ENCODE measurements at regions of chr17 and their contacts with region 1.

Region 1: GRCh38 chr17:72120642-72121163 is at the start of gene SOX9:
- DNase-seq: peak; percentile 91 to 95 (median 94)
- ATAC-seq: peak; percentile 94 to 95
- H3K4me3 ChIP-seq: peak within 1 kb of the TSS; percentile 59
- H3K27ac ChIP-seq: peak within 1 kb of the TSS; percentile 75
- H3K4me1 ChIP-seq: peaks cover 5% of the 10 kb centered on the region
- H3K27me3 ChIP-seq: no peaks in the 10 kb centered on the region
- total RNA-seq, gene SOX9: 10.5 to 23.5 (median 20.6) TPM

Region 2: DNA sequence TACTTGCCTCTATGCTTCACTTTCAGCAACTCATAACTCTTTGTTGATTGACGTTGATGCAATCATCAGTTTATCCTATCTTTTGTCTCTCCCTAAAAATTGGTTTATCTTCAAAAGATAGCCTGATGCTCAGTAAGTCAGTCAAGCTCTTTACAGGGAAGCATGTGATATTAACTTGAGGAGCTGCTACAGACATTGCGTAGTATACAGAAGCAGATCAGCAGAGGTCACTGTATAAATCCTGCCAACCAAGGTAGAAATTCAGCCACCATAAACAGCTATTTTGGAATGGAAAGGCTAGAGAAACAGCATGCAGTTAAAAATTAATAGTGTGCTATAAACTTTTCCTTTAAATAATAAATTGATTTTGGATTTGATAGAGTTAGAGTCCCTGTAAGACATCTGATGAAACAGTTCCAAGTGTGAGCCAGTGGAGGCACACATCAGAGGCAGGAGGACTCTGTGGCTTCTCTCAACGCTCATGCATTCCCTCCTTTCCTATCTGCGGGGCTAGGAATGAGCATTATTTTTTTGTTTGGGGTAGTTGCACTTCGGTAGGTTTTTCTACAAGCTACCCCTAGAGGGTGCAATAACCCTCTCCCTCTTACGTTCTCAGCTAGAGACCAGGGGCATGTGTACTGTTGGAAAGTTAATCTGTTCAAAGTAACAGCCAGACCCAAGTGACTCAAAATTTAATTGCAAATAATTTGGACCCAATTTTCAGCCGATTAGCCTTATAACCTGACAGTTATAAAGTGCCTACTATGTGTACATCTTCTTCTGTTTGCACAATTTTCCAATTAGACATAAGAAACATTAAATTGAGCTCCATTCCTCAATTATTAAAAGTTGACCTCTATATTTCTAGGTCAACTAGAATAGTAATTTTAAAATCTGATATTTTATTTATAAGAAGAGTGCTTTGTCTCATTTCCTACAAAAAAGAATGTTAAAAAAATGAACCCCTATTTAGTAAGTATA is 647.6 kb before region 1 on chr17:
- intact Hi-C with region 1: loop called in 2 of 4 experiments (anchors 5 to 10 kb)
- DNase-seq: no peak
- ATAC-seq: peak; percentile 50 to 56
- H3K4me3 ChIP-seq: no peak overlapping the region
- H3K27ac ChIP-seq: no peak overlapping the region
- H3K4me1 ChIP-seq: no peaks in the 10 kb centered on the region
- H3K27me3 ChIP-seq: no peaks in the 10 kb centered on the region

Region 3: DNA sequence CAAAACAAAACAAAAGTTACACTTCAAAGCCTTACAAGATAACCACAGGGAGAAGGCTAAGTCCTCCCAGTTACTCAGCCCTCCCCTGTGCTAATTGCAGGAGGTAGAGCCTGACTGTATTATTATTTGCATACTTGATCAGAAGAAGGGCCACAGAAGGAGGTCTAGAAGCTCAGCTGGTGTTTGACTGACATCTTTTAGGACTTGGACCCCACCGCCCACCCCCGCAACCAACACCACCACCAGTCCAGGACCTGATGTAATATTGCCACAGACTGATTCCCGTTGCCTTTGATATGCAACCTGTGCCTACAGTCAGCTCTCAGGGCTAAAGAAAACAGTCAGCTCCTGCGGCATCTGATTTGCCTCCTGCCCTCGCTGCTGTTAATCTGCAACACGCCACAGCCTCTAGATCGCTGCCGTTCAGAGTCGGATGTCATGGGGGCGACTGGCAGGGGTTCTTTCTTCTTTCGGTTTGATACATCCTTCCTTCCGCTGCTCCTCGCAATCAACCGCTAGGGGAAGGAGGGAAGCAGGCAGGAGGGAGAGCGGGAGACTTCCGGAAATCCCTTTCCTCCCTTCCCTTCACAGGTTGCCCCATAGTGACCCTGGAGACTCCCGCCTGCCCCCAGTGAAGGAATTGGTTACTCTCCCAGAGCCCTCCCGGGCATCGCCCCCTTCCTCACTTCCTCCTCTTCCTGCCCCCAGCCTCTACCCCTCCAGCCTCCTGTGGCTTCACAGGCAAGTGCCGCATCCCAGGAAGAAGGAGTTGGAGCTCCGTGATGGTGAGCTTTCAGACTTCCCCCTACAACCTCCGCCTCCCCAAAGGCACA is 90.4 kb before region 1 on chr17:
- intact Hi-C with region 1: loop called in 1 of 4 experiments (anchors 10 kb)
- DNase-seq: peak; percentile 40 to 80 (median 60)
- ATAC-seq: peak; percentile 76 to 78
- H3K4me3 ChIP-seq: peak overlapping the region; percentile 49
- H3K27ac ChIP-seq: no peak overlapping the region
- H3K4me1 ChIP-seq: peaks cover 2% of the 10 kb centered on the region
- H3K27me3 ChIP-seq: no peaks in the 10 kb centered on the region

Region 4: GRCh38 chr17:72046643-72047612 is 73.8 kb before region 1 on chr17:
- intact Hi-C with region 1: no loop called
- DNase-seq: no peak
- ATAC-seq: no peak
- H3K4me3 ChIP-seq: no peak overlapping the region
- H3K27ac ChIP-seq: no peak overlapping the region
- H3K4me1 ChIP-seq: no peaks in the 10 kb centered on the region
- H3K27me3 ChIP-seq: no peaks in the 10 kb centered on the region

Region 5: GRCh38 chr17:72151565-72152391 is 31.1 kb after region 1 on chr17:
- intact Hi-C with region 1: no loop called
- DNase-seq: peak; percentile 69 to 82 (median 80)
- ATAC-seq: peak; percentile 89 to 96
- H3K4me3 ChIP-seq: no peak overlapping the region
- H3K27ac ChIP-seq: peak overlapping the region; percentile 97
- H3K4me1 ChIP-seq: peaks cover 2% of the 10 kb centered on the region
- H3K27me3 ChIP-seq: no peaks in the 10 kb centered on the region

Region 6: GRCh38 chr17:72187556-72187955 is 66.9 kb after region 1 on chr17:
- intact Hi-C with region 1: loop called in 2 of 4 experiments (anchors 5 kb)
- DNase-seq: peak; percentile 83 to 91 (median 88)
- ATAC-seq: peak; percentile 71 to 76
- H3K4me3 ChIP-seq: no peak overlapping the region
- H3K27ac ChIP-seq: peak overlapping the region; percentile 25
- H3K4me1 ChIP-seq: peaks cover under 1% of the 10 kb centered on the region
- H3K27me3 ChIP-seq: no peaks in the 10 kb centered on the region

Region 7: DNA sequence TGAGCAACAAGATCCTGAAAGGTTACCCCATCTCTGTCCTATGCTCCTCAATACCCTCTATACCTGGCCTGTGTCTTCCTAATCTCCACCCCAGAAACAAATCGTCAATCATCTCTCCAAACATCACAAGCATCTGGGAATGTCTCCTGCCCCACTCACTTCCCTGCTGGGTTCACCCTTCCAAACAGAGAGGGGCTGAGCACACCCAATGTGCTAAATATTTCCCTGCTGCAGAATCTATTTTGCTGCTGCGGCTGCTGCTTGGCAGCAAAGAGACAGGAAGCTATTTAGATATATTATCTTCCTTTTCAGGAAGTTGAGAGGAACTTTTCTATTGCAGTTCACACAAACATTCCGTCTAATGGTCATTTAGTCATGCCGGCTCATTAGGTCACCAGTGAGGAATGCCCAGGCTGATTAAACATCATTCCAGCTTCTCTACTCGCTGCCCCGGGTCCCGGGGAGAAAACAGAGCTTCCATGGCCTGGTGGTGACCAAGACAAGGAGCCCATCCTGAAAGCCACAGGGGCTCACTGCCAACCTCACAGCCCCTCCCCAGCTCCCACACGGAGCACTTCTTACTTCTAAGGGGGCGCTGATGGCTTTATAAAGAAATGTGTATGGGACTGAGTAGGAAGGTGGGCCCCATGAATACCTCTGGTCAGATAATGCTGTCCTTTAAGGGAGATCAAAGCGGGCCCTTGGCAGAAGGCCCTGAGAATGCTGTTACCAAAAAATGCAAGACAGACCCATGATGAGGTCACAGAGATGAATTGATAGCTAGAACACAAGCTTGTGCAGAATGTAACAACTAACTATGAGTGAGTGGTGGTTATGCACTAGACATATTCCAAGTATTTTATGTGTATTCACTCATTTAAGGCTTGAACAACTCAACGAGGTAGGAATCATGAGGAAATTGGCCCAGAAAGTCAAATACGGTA is 218.4 kb after region 1 on chr17:
- intact Hi-C with region 1: loop called in 1 of 4 experiments (anchors 10 kb)
- DNase-seq: peak; percentile 58 to 70 (median 69)
- ATAC-seq: peak; percentile 70 to 83
- H3K4me3 ChIP-seq: no peak overlapping the region
- H3K27ac ChIP-seq: no peak overlapping the region
- H3K4me1 ChIP-seq: peaks cover 4% of the 10 kb centered on the region
- H3K27me3 ChIP-seq: no peaks in the 10 kb centered on the region

Region 8: GRCh38 chr17:72539981-72540897 is 419.5 kb after region 1 on chr17:
- intact Hi-C with region 1: loop called in 1 of 4 experiments (anchors 5 kb)
- DNase-seq: peak; percentile 82 to 91 (median 91)
- ATAC-seq: peak; percentile 97 to 98
- H3K4me3 ChIP-seq: no peak overlapping the region
- H3K27ac ChIP-seq: no peak overlapping the region
- H3K4me1 ChIP-seq: peaks cover 2% of the 10 kb centered on the region
- H3K27me3 ChIP-seq: no peaks in the 10 kb centered on the region